Astrocyte of the cerebellum (primary cell): ENCODE measurements at regions of chr11 and their contacts with region 1.

Region 1: DNA sequence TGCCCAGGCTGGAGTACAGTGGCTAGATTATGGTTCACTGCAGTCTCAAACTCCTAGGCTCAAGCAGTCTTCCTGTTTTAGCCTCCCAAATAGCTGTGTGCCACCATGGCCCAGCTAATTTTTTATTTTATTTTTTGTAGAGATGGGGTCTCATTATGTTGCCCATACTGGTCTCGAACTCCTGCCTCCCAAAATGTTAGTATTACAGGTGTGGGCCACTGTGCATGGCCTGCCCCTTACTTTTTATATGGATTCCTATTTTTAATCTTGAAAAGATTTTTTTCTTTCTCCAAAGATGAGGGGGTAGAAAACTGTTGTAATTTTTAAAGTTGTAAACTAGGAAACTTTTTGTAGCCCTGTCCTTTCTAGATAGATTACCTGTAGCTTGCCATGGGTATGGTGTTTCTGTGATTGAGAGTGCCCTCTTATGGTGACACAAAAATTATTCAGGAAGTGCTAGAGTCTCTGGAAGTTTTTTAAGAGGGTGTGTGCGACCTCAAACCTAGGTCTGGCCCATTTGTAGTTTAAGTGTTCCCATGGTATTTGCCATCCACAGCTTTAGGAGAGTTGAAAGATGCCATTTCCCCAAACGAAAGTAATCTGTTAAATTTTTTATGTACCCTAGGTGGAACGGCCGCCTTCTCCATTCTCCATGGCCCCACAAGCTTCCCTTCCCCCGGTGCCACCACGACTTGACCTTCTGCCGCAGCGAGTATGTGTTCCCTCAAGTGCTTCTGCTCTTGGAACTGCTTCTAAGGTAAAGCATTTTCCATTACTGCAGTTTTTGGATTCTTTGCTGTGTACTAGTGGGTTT is 32.4 kb downstream of the MCAM start:
- DNase-seq: peak; percentile 9
- H3K4me3 ChIP-seq: no peak overlapping the region
- CTCF ChIP-seq: peak; percentile 40

Region 2: DNA sequence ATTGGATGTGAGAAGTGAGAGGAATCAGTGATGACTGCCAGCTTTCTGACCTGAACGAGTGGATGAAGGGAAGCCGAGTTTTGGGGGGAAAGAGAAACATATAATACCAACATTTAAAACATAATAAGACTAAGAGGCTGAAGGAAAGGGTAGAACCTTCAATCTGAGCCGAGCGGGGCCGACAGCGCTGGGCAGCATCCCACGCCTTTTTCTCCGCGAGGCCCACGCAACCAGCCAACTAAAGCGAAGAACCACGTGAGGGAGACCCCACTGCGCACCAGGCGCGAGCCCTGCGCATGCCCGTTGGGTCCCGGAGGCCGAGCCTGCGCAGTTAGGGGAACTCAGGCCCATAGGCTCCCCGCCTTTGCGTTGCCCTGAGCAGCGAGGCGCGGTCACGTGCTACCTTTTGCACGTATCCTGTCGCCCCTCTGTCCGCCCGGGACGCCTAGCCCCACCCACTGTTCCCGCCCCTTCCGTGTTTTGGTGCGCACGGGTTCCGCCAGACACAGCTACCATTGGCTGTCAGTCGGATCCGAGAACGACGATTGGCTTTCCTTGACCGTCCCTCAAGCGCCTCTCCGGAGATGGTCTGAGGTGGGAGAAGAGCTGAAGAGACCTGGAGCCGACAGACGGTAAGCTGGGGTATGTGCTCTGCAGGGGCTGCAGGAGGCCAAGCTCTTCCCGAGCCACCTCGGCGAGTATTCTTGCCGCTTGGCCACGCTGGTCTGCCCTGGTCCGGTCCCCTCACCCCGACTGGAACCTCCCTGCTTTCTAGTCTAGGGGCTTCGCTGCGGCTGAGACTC is 163.3 kb before region 1 on chr11 and contains the start of gene HINFP:
- in situ Hi-C with region 1: loop called (anchors 25 kb)
- DNase-seq: peak; percentile 98
- H3K4me3 ChIP-seq: peak within 1 kb of the TSS; percentile 90
- CTCF ChIP-seq: no peak